AG04450 (cell line): ENCODE measurements at regions of chr1 and their contacts with region 1.

Region 1: GRCh38 chr1:31564134-31564989 is 12.0 kb upstream of the TINAGL1 start:
- DNase-seq: no peak
- H3K4me3 ChIP-seq: no peak overlapping the region
- H3K27ac ChIP-seq: no peak overlapping the region
- H3K27me3 ChIP-seq: peaks cover 4% of the 10 kb centered on the region
- CTCF ChIP-seq: peak; percentile 90

Region 2: DNA sequence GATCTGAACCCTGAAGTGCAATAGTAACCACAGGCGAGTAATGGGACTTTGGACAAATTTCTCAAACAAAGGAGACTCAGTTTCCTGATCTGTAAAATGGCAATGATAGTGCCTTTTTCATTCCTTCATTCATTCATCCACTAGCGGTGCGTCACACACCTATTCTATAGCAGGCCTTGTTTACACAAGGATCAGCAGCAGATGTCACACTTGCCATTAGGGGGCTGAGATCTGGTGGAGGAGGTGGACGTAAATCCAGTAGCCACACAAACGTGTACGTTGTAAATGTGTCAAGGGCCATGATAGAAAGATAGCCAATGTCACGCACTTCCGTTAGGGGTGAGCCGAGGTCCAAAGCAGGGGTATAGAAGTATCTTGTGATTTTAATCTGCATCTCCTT is 117.2 kb before region 1 on chr1:
- CTCF ChIA-PET with region 1: interaction called, 13 read pairs
- POLR2A ChIA-PET with region 1: no interaction called
- DNase-seq: no peak
- H3K4me3 ChIP-seq: no peak overlapping the region
- H3K27ac ChIP-seq: no peak overlapping the region
- H3K27me3 ChIP-seq: peaks cover 11% of the 10 kb centered on the region
- CTCF ChIP-seq: no peak

Region 3: DNA sequence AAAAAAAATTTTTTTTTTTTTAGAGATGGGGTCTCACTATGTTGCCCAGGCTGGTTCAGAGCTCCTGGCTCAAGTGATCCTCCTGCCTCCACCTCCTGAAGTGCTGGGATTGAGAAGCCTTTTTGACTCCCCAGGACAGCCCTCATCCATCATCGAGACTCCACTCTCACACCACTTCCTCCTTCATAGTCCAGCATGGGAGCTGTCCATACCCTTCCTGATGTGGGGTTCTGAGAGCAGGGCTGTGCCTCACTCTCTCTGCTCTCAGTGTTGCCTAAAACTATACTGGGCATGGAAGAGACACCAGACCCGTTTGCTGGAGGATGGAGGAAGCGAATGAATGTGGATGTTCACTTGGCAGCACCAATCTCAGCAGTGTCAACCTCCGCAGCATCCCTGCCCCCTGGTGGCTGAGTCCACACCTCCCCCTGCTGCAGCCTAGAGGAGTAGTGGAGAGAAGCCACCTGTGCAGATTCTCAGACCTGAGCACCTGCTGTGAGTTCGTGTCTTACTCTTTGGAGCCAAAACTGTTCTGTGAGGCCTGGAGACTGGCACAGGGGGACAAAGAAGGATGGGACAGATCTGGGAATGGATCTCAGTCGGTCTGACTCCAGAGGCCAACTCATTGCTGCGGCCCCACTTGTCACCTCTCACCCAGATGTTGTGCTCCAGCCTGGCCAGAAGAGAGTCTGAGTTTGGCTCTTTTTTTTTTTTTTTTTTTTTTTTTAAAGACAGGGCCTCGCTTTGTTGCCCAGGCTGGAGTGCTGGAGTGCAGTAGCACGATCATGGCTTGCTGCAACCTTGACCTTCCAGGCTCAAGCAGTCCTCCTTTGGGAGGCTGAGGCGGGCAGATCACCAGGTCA is 29.6 kb after region 1 on chr1:
- CTCF ChIA-PET with region 1: interaction called, 48 read pairs
- POLR2A ChIA-PET with region 1: no interaction called
- DNase-seq: peak; percentile 46
- H3K4me3 ChIP-seq: no peak overlapping the region
- H3K27ac ChIP-seq: no peak overlapping the region
- H3K27me3 ChIP-seq: peaks cover 9% of the 10 kb centered on the region
- CTCF ChIP-seq: peak; percentile 97

Region 4: DNA sequence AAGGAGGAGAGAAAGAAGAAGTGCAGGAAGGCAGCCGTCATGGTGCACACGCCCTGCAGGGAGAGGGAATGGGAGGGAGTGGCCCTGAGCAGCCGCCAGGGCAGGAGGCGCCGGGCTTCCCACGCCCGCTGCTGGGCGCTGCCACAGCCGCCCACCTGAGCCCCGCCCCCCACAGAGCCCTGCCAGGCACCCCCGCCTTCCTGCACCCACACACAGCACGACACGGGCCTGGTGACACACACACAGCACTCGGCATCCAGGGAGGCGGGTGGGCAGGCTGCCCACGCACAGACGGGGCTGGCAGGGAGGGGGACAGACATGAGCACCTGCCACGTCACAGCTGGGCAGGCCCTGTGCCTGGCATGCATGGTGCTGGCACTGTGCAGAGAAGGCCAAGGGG is 172.3 kb after region 1 on chr1:
- CTCF ChIA-PET with region 1: no interaction called
- POLR2A ChIA-PET with region 1: no interaction called
- DNase-seq: no peak
- H3K4me3 ChIP-seq: no peak overlapping the region
- H3K27ac ChIP-seq: no peak overlapping the region
- H3K27me3 ChIP-seq: no peaks in the 10 kb centered on the region
- CTCF ChIP-seq: no peak